ENCODE measurements at regions of chr3 and their contacts with region 1.

Region 1: DNA sequence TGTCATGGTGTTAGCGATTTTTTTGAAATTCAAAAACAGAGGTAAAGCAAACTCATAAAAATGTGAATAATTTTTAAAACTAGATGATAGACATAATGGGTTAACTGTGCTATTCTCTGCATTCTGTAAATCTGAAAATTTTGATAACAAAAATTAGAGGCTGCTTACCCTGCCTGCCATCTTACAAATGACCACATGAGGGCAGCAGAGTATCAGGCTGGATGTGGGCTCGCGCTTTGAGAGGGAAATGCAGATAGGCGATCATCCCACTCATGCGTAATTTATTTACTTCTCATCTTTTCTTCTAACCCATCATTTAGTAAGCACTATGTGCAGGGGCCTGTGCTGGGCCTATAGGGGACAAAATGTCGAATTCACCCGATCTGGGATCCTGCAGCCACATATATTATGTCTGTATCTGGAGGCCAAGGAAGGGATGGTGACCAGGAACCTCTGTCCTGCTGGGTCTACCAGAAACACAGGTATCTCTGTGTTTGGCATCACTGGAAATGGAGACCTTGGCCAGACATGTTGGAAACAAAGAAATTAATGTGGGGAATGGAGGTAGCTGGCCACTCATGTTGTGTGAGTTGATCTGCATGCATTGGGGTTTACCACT is 7.8 kb upstream of the RAD18 start:
- DNase-seq: peak; percentile 60
- H3K4me3 ChIP-seq: no peak overlapping the region
- H3K27ac ChIP-seq: no peak overlapping the region
- H3K4me1 ChIP-seq: no peaks in the 10 kb centered on the region
- H3K27me3 ChIP-seq: peaks cover 2 to 8% of the 10 kb centered on the region in 2 experiments
- CTCF ChIP-seq: peak; percentile 82 to 89
- POLR2A ChIP-seq: no peak

Region 2: DNA sequence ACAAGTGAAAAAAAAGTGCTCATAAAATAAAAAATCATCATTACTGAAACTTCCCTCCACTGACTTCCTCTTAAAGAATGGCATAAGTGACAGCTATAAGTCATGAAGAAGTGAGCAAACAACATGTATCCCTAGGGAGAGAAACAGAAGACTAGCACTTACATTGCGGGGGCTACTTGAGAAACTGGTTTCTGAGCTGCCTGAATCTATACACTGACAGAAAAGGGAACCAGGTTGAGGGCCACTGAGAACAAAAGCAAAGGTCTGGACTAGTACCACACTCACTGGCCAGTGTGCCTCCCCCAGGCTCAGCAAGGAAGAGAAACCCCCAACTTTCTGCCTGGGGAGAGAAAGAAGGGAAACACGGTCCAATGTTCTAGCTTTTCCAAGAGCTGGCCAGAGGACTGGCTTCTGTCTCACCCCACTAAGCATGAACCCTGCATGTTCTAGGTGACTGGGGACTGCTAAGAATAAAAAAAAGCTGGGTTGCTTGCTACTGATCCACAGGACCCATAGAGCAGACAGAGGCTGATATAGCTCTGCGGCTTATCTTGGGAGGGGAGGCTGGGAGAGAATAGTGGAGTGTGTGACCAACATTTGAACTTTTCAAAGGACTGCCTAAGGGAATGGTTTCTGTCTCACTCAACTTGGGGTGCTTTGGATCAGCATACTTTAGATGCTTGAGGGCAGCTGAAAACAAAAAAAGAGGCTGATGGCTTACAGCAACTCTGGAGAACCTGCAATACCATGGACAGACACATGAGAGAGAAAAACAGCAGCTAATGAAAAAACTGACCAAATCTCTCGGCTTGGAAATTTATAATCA is 15.9 kb before region 1 on chr3:
- CTCF ChIA-PET with region 1: no interaction called
- POLR2A ChIA-PET with region 1: no interaction called
- dilution Hi-C with region 1: no loop called
- intact Hi-C with region 1: no loop called
- DNase-seq: no peak
- H3K4me3 ChIP-seq: no peak overlapping the region
- H3K27ac ChIP-seq: no peak overlapping the region
- H3K4me1 ChIP-seq: no peaks in the 10 kb centered on the region
- H3K27me3 ChIP-seq: no peaks in the 10 kb centered on the region
- CTCF ChIP-seq: no peak
- POLR2A ChIP-seq: no peak

Region 3: DNA sequence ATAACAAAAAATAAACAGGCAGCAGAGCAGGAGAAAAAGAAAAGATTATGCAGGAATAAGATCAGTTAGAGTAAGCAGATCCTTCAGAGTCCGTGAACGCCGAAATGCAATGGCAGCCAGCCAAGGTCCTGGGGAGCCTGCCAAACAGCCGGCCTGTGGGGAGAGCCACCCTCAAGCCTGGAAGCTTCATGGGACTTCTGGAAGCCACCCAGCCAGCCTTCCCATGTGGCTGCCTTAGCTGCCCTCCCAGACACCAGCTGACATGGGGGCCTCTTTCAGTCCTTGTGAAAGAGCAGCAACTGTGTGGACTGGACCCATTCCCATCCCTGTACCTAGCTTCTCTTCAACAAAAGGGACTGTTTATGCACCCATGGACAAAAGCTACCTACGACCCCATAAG is 57.1 kb after region 1 on chr3:
- CTCF ChIA-PET with region 1: no interaction called
- POLR2A ChIA-PET with region 1: no interaction called
- dilution Hi-C with region 1: no loop called
- intact Hi-C with region 1: no loop called
- DNase-seq: peak; percentile 14
- H3K4me3 ChIP-seq: no peak overlapping the region
- H3K27ac ChIP-seq: no peak overlapping the region
- H3K4me1 ChIP-seq: no peaks in the 10 kb centered on the region
- H3K27me3 ChIP-seq: no peaks in the 10 kb centered on the region
- CTCF ChIP-seq: no peak
- POLR2A ChIP-seq: no peak

Region 4: GRCh38 chr3:9067352-9067975 is 96.4 kb after region 1 on chr3:
- CTCF ChIA-PET with region 1: interaction called, 9 read pairs
- POLR2A ChIA-PET with region 1: no interaction called
- dilution Hi-C with region 1: no loop called
- intact Hi-C with region 1: loop called (anchors 1 kb)
- DNase-seq: peak; percentile 61
- H3K4me3 ChIP-seq: no peak overlapping the region
- H3K27ac ChIP-seq: no peak overlapping the region
- H3K4me1 ChIP-seq: no peaks in the 10 kb centered on the region
- H3K27me3 ChIP-seq: no peaks in the 10 kb centered on the region
- CTCF ChIP-seq: peak; percentile 78
- POLR2A ChIP-seq: no peak